A673 (cell line): ENCODE measurements at regions of chr2 and their contacts with region 1.

Region 1: GRCh38 chr2:85132834-85133637 is at the start of gene TCF7L1:
- DNase-seq: peak; percentile 93
- H3K4me3 ChIP-seq: peak within 1 kb of the TSS; percentile 71
- H3K27ac ChIP-seq: peak within 1 kb of the TSS; percentile 55
- H3K4me1 ChIP-seq: peaks cover 18% of the 10 kb centered on the region
- H3K27me3 ChIP-seq: no peaks in the 10 kb centered on the region
- CTCF ChIP-seq: peak; percentile 96
- total RNA-seq, gene TCF7L1: 21.9 and 29.3 TPM in 2 replicates

Region 2: DNA sequence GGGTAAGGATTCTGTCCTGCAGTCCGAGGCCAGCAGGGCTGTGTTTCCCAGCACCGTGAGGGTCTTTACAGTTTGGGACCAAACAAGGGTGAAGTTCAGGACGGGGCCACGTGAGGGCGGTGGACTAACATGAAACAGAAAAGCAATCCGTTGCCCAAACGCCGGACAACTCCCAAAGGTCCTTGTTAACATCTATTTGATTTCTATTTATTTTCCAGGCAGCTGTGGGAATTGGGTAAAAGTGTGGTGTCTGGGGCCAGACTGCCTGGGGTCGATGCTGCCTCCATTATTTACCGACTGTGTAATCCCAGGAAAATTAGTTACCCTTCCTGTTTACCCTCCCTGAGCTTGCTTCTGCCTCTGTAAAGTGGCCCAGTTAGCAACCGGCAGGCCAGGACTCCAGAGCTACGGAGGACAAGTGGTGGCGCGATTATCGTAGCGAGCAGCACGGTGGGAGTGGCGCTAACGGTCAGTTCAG is 66.1 kb before region 1 on chr2:
- CTCF ChIA-PET with region 1: no interaction called
- POLR2A ChIA-PET with region 1: no interaction called
- intact Hi-C with region 1: loop called (anchors 5 kb)
- DNase-seq: peak; percentile 82
- H3K4me3 ChIP-seq: peak overlapping the region; percentile 14
- H3K27ac ChIP-seq: no peak overlapping the region
- H3K4me1 ChIP-seq: no peaks in the 10 kb centered on the region
- H3K27me3 ChIP-seq: no peaks in the 10 kb centered on the region
- CTCF ChIP-seq: peak; percentile 79

Region 3: DNA sequence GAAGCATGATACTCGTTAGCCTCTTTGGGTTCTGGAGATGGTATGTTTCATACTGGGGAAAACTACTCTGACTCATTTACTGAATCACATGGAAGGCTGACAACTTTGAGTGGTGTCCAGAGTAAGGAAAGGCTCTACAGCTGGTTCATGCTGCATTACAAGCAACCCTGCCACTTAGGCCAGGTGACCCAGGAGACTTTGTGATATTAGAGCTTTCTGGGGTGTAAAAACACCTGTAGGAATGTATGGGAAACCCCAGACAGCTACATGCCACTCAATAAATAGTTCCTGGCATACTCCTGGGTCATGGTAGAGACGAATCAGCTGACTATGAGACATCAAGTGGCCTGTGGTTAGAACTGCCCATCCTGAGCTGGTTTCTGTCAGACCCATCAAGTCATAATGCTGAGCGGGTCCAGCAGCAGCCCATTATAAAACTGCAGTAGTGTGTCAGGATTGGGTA is 21.2 kb before region 1 on chr2:
- CTCF ChIA-PET with region 1: no interaction called
- POLR2A ChIA-PET with region 1: no interaction called
- intact Hi-C with region 1: no loop called
- DNase-seq: no peak
- H3K4me3 ChIP-seq: no peak overlapping the region
- H3K27ac ChIP-seq: no peak overlapping the region
- H3K4me1 ChIP-seq: no peaks in the 10 kb centered on the region
- H3K27me3 ChIP-seq: no peaks in the 10 kb centered on the region
- CTCF ChIP-seq: no peak

Region 4: GRCh38 chr2:85215448-85216401 is 82.7 kb after region 1 on chr2:
- CTCF ChIA-PET with region 1: interaction called, 16 read pairs
- POLR2A ChIA-PET with region 1: no interaction called
- intact Hi-C with region 1: loop called (anchors 2 kb)
- DNase-seq: peak; percentile 96
- H3K4me3 ChIP-seq: peak overlapping the region; percentile 32
- H3K27ac ChIP-seq: peak overlapping the region; percentile 98
- H3K4me1 ChIP-seq: peaks cover 48% of the 10 kb centered on the region
- H3K27me3 ChIP-seq: no peaks in the 10 kb centered on the region
- CTCF ChIP-seq: no peak

Region 5: GRCh38 chr2:85243101-85244072 is 110.4 kb after region 1 on chr2:
- CTCF ChIA-PET with region 1: interaction called, 5 read pairs
- POLR2A ChIA-PET with region 1: no interaction called
- intact Hi-C with region 1: loop called (anchors 2 kb)
- DNase-seq: peak; percentile 76
- H3K4me3 ChIP-seq: no peak overlapping the region
- H3K27ac ChIP-seq: no peak overlapping the region
- H3K4me1 ChIP-seq: peaks cover 92% of the 10 kb centered on the region
- H3K27me3 ChIP-seq: no peaks in the 10 kb centered on the region
- CTCF ChIP-seq: peak; percentile 75

Region 6: GRCh38 chr2:85288244-85288725 is 155.2 kb after region 1 on chr2:
- CTCF ChIA-PET with region 1: interaction called, 15 read pairs
- POLR2A ChIA-PET with region 1: no interaction called
- intact Hi-C with region 1: loop called (anchors 1 kb)
- DNase-seq: no peak
- H3K4me3 ChIP-seq: no peak overlapping the region
- H3K27ac ChIP-seq: peak overlapping the region; percentile 11
- H3K4me1 ChIP-seq: peaks cover 12% of the 10 kb centered on the region
- H3K27me3 ChIP-seq: no peaks in the 10 kb centered on the region
- CTCF ChIP-seq: no peak